ENCODE measurements at regions of chr20 and their contacts with region 1.

Region 1: DNA sequence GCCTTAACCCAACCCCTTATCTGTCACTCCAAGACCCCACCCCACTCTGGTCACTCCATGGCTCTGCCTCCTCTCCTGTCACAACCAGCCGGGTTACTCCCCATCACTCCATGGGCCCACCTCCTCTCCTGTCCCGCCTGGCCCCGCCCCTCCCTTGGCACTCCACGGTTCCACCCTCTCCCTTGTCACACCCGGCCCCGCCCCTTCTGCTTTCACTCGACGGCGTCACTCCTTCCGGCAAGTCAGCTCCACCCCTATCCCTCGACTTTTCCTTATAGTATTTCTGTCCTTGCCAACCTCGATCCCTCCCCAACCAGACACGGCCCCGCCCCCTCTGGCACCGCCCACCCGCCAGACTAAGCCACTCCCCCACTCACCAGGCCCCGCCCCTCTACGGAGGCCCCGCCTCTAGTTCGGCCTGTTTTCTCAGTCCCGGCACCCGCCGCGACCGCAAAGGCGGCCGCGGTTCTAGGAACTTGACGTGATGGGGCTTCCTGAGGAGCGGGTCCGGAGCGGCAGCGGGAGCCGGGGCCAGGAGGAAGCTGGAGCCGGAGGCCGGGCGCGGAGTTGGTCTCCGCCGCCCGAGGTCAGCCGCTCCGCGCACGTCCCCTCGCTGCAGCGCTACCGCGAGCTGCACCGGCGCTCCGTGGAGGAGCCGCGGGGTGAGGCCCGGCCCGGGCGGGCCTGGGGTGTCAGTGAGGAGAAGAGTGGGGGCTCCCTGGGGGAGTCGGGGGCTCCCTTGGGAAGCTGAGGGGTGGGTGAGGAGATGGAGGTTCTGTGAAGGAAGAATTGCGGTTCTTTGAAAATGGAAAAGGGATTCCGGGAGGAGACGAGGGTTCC is at the start of gene ACSS2:
- DNase-seq: peak; percentile 87 to 93 (median 89)
- H3K4me3 ChIP-seq: peak within 1 kb of the TSS; percentile 58 to 67
- H3K4me3 Mint-ChIP-seq: peak within 1 kb of the TSS; percentile 80 to 91 (median 89)
- H3K27ac ChIP-seq: peak within 1 kb of the TSS; percentile 37
- H3K27ac Mint-ChIP-seq: peak within 1 kb of the TSS; percentile 65 to 96 (median 92)
- H3K4me1 ChIP-seq: peaks cover 48% of the 10 kb centered on the region
- H3K4me1 Mint-ChIP-seq: peaks cover 36 to 66% (median 50%) of the 10 kb centered on the region in 4 donors
- H3K27me3 ChIP-seq: no peaks in the 10 kb centered on the region
- H3K27me3 Mint-ChIP-seq: no peaks in the 10 kb centered on the region
- total RNA-seq, gene ACSS2: 19.8 to 24.3 TPM

Region 2: GRCh38 chr20:34676642-34677373 is 199.6 kb before region 1 on chr20 and contains the start of gene PIGU:
- CTCF ChIA-PET with region 1: no interaction called
- POLR2A ChIA-PET with region 1: interaction called, 3 read pairs
- intact Hi-C with region 1: loop called (anchors 10 kb)
- DNase-seq: peak; percentile 94 to 96 (median 96)
- H3K4me3 ChIP-seq: peak within 1 kb of the TSS; percentile 57 to 67
- H3K4me3 Mint-ChIP-seq: peak within 1 kb of the TSS; percentile 95 to 99 (median 97)
- H3K27ac ChIP-seq: peak within 1 kb of the TSS; percentile 66
- H3K27ac Mint-ChIP-seq: peak within 1 kb of the TSS; percentile 93 to 98 (median 97)
- H3K4me1 ChIP-seq: peaks cover 19% of the 10 kb centered on the region
- H3K4me1 Mint-ChIP-seq: peaks cover 11 to 25% (median 19%) of the 10 kb centered on the region in 4 donors
- H3K27me3 ChIP-seq: no peaks in the 10 kb centered on the region
- H3K27me3 Mint-ChIP-seq: no peaks in the 10 kb centered on the region
- total RNA-seq, gene PIGU: 15.1 to 18.2 TPM

Region 3: DNA sequence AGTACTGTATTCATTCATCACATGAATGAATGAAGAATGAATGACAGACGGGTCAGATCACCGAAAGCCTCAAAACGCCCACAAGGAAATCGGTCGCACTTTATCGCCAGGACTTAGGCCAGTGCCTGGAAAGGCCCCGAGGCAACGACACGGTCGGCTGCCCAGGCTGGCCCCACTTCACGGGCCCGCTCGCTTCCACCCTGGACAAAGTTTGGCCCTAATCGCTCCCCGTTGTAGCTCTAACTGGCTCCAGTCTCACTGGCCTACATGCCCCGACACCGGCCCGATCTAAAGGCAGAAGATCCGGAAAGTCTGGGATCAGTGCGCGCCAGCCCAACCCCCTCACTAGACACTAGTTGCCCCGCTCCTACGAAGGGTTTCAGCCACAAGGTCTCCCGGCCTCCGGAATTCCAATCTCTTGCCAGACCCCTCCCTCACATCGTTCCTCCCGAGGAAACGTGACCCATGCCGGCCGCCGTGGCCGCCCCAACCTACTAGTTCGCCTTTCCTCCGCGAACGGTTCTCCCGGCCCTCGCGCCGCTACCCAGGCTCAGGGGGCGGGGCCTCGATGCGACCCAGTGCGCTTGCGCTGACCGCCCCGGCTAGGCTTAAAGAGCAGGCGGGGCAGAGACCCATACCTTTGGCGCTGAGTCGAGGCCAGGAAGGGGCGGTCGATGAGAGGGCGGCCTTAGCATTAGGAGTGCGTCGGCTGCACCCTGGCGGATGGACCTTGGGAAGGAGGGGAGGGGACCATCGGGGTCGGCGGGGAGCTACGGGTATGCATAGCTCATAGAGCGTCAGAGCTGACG is 79.1 kb after region 1 on chr20 and contains the starts of genes GSS and MYH7B:
- CTCF ChIA-PET with region 1: interaction called, 100 read pairs
- POLR2A ChIA-PET with region 1: interaction called, 34 read pairs
- intact Hi-C with region 1: loop called (anchors 1 kb)
- DNase-seq: peak; percentile 92 to 97 (median 94)
- H3K4me3 ChIP-seq: peak within 1 kb of the TSS; percentile 45 to 88
- H3K4me3 Mint-ChIP-seq: peak within 1 kb of the TSS; percentile 93 to 100 (median 97)
- H3K27ac ChIP-seq: peak within 1 kb of the TSS; percentile 71
- H3K27ac Mint-ChIP-seq: peak within 1 kb of the TSS; percentile 93 to 98 (median 98)
- H3K4me1 ChIP-seq: peaks cover 13% of the 10 kb centered on the region
- H3K4me1 Mint-ChIP-seq: peaks cover 19 to 28% (median 21%) of the 10 kb centered on the region in 4 donors
- H3K27me3 ChIP-seq: no peaks in the 10 kb centered on the region
- H3K27me3 Mint-ChIP-seq: no peaks in the 10 kb centered on the region
- total RNA-seq, gene GSS: 41.0 to 43.3 TPM
- total RNA-seq, gene MYH7B: 0.39 to 0.47 TPM

Region 4: GRCh38 chr20:35207950-35208611 is 331.7 kb after region 1 on chr20:
- CTCF ChIA-PET with region 1: no interaction called
- POLR2A ChIA-PET with region 1: no interaction called
- intact Hi-C with region 1: loop called (anchors 1 kb)
- DNase-seq: peak; percentile 69 to 78 (median 74)
- H3K4me3 ChIP-seq: no peak overlapping the region
- H3K4me3 Mint-ChIP-seq: no peak overlapping the region
- H3K27ac ChIP-seq: no peak overlapping the region
- H3K27ac Mint-ChIP-seq: no peak overlapping the region
- H3K4me1 ChIP-seq: no peaks in the 10 kb centered on the region
- H3K4me1 Mint-ChIP-seq: no peaks in the 10 kb centered on the region
- H3K27me3 ChIP-seq: no peaks in the 10 kb centered on the region
- H3K27me3 Mint-ChIP-seq: no peaks in the 10 kb centered on the region